Dorsolateral prefrontal cortex (tissue), 120 donors: ENCODE measurements at regions of chr2 and their contacts with region 1.

Region 1: DNA sequence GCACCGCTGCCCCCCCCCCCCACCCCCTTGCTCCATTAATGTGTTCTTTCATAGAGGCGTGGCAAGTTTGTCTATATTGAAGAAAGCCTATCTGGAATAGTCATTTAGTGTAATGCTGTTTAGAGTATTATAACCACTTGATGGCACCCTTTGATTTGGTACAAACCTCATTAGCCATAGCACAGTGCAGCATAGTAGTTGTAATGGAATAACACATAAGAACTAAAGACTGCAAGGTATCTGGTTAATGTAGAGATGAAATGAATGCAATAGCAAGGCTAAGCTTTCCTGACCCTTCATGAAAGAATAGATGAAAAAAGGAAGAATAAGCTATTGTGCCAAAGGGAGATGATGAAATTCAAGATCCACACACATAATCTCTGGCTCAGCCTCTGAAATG is 81.9 kb downstream of the EHBP1 start:
- DNase-seq: no peak
- H3K4me3 ChIP-seq: no peak overlapping the region
- H3K27ac ChIP-seq: no peak overlapping the region
- H3K27me3 ChIP-seq: no peaks in the 10 kb centered on the region
- CTCF ChIP-seq: peak in 49 of 56 donors; percentile 24 to 69 (median 45)

Region 2: DNA sequence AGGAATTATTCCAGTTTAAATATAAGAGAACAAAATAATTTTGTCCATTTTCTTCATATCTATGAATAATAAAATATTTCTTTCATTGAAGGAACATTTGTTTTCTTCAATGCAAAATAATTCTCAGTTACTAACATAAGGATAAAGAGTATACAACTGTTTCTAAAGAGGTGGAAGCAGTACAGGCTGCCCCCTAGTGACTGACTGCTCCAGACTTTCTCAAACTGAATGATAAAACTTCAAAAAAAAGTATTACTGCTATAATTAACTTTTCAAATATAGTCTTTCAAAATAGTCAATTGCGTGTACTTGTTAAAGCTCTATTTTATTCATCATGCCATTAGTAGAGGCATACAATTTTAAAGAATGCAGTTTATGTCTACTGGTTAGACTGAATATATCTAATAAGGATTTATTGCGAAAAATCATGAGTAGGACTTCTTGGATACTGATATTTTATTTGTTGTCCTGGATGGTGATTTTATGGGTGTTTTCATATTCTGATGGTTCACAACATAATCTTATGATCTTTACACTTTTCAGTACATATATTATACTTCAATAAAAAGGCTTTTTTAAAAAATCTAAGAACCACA is 700.8 kb after region 1 on chr2:
- intact Hi-C with region 1: loop called (anchors 5 kb)
- DNase-seq: peak in 7 of 10 donors; percentile 12 to 67 (median 38)
- H3K4me3 ChIP-seq: no peak overlapping the region
- H3K27ac ChIP-seq: peak overlapping the region in 2 of 59 donors; percentile 8 to 12
- H3K27me3 ChIP-seq: no peaks in the 10 kb centered on the region
- CTCF ChIP-seq: peak in 55 of 56 donors; percentile 43 to 86 (median 73)